Activated CD4-positive, alpha-beta T cell treated with anti-CD3 and anti-CD28 coated beads for 36 hours (primary cell): ENCODE measurements at regions of chr19 and their contacts with region 1.

Region 1: GRCh38 chr19:13978347-13978733 is 26.0 kb downstream of the DCAF15 start:
- DNase-seq: peak; percentile 48
- ATAC-seq: peak; percentile 40
- H3K4me3 Mint-ChIP-seq: no peak overlapping the region
- H3K27ac Mint-ChIP-seq: no peak overlapping the region
- H3K4me1 Mint-ChIP-seq: peaks cover 19% of the 10 kb centered on the region
- H3K27me3 Mint-ChIP-seq: no peaks in the 10 kb centered on the region

Region 2: DNA sequence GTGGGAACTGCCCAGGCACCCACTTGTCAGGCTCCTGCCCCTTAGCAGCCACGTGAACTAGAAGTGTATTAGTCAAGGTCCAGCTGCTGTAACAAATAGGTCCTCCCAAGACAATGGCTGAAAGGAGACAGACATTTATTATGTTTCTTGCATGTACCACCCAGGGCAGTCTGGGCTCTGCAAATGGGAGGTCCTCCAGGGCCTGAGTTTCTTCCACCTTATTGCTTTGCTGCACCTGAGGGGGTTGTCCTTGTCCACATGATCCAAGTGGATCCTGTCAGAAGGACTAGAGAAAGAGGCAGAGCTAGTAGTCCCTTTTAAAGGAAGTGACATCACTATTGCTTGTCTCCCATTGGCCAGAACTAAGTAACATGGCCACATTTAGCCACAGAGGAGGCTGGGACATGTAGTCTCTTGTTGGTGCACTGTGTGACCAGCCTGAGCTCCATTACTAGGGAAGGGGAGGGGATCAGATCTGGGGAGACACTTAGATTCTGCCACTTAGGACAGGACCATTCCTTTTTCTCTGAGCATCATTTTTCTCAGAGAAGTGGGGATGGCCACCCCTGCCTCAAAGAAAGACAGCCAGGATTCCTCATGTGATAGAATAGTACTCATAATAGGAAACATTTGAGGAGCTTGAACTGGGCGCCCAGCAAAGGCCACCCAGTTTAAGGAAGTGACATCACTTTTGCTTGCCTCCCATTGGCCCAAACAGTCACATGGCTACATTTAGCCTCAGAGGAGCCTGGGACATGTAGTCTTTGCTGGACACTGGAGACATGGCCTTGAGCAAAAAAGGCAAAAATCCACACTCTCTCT is 57.2 kb before region 1 on chr19:
- CTCF ChIA-PET with region 1: no interaction called
- POLR2A ChIA-PET with region 1: no interaction called
- intact Hi-C with region 1: loop called in 1 of 2 experiments (anchors 5 kb)
- DNase-seq: peak; percentile 61
- ATAC-seq: peak; percentile 94
- H3K4me3 Mint-ChIP-seq: no peak overlapping the region
- H3K27ac Mint-ChIP-seq: peak overlapping the region; percentile 19
- H3K4me1 Mint-ChIP-seq: no peaks in the 10 kb centered on the region
- H3K27me3 Mint-ChIP-seq: no peaks in the 10 kb centered on the region